B cell (primary cell): ENCODE measurements at regions of chr22 and their contacts with region 1.

Region 1: GRCh38 chr22:32660292-32660691 is 141.2 kb upstream of the TIMP3 start:
- DNase-seq: peak; percentile 61
- ATAC-seq: peak; percentile 31
- H3K4me3 ChIP-seq: no peak overlapping the region
- H3K4me3 Mint-ChIP-seq: no peak overlapping the region
- H3K27ac ChIP-seq: no peak overlapping the region
- H3K27ac Mint-ChIP-seq: no peak overlapping the region
- H3K4me1 ChIP-seq: no peaks in the 10 kb centered on the region
- H3K4me1 Mint-ChIP-seq: no peaks in the 10 kb centered on the region
- H3K27me3 ChIP-seq: peaks cover 0 to 7% (median 0%) of the 10 kb centered on the region in 4 experiments
- H3K27me3 Mint-ChIP-seq: peaks cover 24% of the 10 kb centered on the region
- CTCF ChIP-seq: peak; percentile 64

Region 2: GRCh38 chr22:32354360-32355351 is 305.6 kb before region 1 on chr22:
- CTCF ChIA-PET with region 1: no interaction called
- POLR2A ChIA-PET with region 1: no interaction called
- intact Hi-C with region 1: no loop called
- DNase-seq: no peak
- ATAC-seq: no peak
- H3K4me3 ChIP-seq: no peak overlapping the region
- H3K4me3 Mint-ChIP-seq: no peak overlapping the region
- H3K27ac ChIP-seq: no peak overlapping the region
- H3K27ac Mint-ChIP-seq: no peak overlapping the region
- H3K4me1 ChIP-seq: no peaks in the 10 kb centered on the region
- H3K4me1 Mint-ChIP-seq: no peaks in the 10 kb centered on the region
- H3K27me3 ChIP-seq: no peaks in the 10 kb centered on the region
- H3K27me3 Mint-ChIP-seq: peaks cover 4% of the 10 kb centered on the region
- CTCF ChIP-seq: no peak

Region 3: DNA sequence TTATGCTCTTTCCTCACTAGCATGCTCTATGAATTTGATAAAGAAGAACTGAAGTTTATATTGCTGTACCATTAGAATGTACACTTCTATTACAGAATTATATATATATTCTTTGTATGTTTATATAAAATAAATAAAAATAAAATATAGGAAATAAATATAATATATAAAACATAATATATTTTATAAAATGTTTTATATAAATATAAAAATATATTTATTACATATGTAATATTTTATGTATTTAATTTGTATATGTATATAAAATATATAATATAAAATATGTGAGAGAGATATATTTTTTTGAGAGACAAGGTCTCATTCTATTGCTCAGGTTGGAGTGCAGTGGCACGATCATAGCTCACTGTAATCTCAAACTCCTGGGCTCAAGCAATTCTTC is 229.9 kb before region 1 on chr22:
- CTCF ChIA-PET with region 1: no interaction called
- POLR2A ChIA-PET with region 1: no interaction called
- intact Hi-C with region 1: no loop called
- DNase-seq: no peak
- ATAC-seq: no peak
- H3K4me3 ChIP-seq: no peak overlapping the region
- H3K4me3 Mint-ChIP-seq: no peak overlapping the region
- H3K27ac ChIP-seq: no peak overlapping the region
- H3K27ac Mint-ChIP-seq: no peak overlapping the region
- H3K4me1 ChIP-seq: no peaks in the 10 kb centered on the region
- H3K4me1 Mint-ChIP-seq: no peaks in the 10 kb centered on the region
- H3K27me3 ChIP-seq: peaks cover 0 to 4% (median 2%) of the 10 kb centered on the region in 4 experiments
- H3K27me3 Mint-ChIP-seq: peaks cover 46% of the 10 kb centered on the region
- CTCF ChIP-seq: no peak

Region 4: DNA sequence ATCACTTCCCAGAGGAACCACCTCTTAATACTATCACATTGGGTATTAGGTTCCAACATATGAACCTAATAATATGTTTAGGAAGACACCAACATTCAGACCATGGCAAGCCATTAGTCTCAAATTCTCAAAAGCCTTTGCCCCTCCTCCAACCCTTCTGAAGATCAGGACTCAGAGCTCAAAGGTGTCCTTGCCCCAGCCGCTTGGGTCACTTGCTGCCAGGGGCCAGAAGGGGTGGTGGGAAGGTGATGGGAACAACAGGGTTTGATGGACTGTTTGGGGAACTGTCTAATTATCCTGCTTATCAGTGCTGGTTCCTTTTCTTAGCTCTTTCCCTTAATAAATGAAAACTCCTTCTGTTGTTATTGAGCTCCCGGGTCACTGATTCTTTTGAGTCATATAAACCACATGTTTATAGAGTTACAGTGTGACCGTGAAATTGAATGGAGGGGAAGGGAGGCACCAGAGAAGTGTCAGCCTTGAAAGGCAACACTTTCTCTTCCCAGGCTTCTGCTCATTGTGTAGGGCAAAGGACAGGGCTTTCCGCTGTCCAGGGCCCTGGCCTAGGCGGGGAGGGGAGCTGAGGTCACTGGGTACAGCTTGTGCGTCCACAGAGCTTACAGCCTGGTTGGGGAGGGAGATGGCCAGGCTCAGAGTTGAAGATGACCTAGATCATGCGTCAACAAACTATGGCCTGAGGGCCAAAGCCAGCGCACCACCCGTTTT is 80.6 kb before region 1 on chr22:
- CTCF ChIA-PET with region 1: no interaction called
- POLR2A ChIA-PET with region 1: no interaction called
- intact Hi-C with region 1: no loop called
- DNase-seq: no peak
- ATAC-seq: no peak
- H3K4me3 ChIP-seq: no peak overlapping the region
- H3K4me3 Mint-ChIP-seq: no peak overlapping the region
- H3K27ac ChIP-seq: no peak overlapping the region
- H3K27ac Mint-ChIP-seq: no peak overlapping the region
- H3K4me1 ChIP-seq: no peaks in the 10 kb centered on the region
- H3K4me1 Mint-ChIP-seq: no peaks in the 10 kb centered on the region
- H3K27me3 ChIP-seq: no peaks in the 10 kb centered on the region
- H3K27me3 Mint-ChIP-seq: peaks cover 16% of the 10 kb centered on the region
- CTCF ChIP-seq: no peak

Region 5: GRCh38 chr22:32985899-32986765 is 325.8 kb after region 1 on chr22:
- CTCF ChIA-PET with region 1: no interaction called
- POLR2A ChIA-PET with region 1: no interaction called
- intact Hi-C with region 1: loop called (anchors 5 kb)
- DNase-seq: peak; percentile 50
- ATAC-seq: peak; percentile 39
- H3K4me3 ChIP-seq: no peak overlapping the region
- H3K4me3 Mint-ChIP-seq: no peak overlapping the region
- H3K27ac ChIP-seq: no peak overlapping the region
- H3K27ac Mint-ChIP-seq: no peak overlapping the region
- H3K4me1 ChIP-seq: no peaks in the 10 kb centered on the region
- H3K4me1 Mint-ChIP-seq: peaks cover 3% of the 10 kb centered on the region
- H3K27me3 ChIP-seq: peaks cover 0 to 4% (median 0%) of the 10 kb centered on the region in 4 experiments
- H3K27me3 Mint-ChIP-seq: peaks cover 16% of the 10 kb centered on the region
- CTCF ChIP-seq: peak; percentile 64

Region 6: GRCh38 chr22:33038131-33038772 is 378.0 kb after region 1 on chr22:
- CTCF ChIA-PET with region 1: no interaction called
- POLR2A ChIA-PET with region 1: no interaction called
- intact Hi-C with region 1: no loop called
- DNase-seq: no peak
- ATAC-seq: no peak
- H3K4me3 ChIP-seq: no peak overlapping the region
- H3K4me3 Mint-ChIP-seq: no peak overlapping the region
- H3K27ac ChIP-seq: no peak overlapping the region
- H3K27ac Mint-ChIP-seq: no peak overlapping the region
- H3K4me1 ChIP-seq: no peaks in the 10 kb centered on the region
- H3K4me1 Mint-ChIP-seq: no peaks in the 10 kb centered on the region
- H3K27me3 ChIP-seq: peaks cover 0 to 6% (median 0%) of the 10 kb centered on the region in 4 experiments
- H3K27me3 Mint-ChIP-seq: peaks cover 33% of the 10 kb centered on the region
- CTCF ChIP-seq: no peak

Region 7: GRCh38 chr22:33202455-33202854 is 542.2 kb after region 1 on chr22:
- CTCF ChIA-PET with region 1: no interaction called
- POLR2A ChIA-PET with region 1: no interaction called
- intact Hi-C with region 1: loop called (anchors 2 kb)
- DNase-seq: peak; percentile 22
- ATAC-seq: no peak
- H3K4me3 ChIP-seq: peak overlapping the region in 1 of 5 experiments; percentile 11
- H3K4me3 Mint-ChIP-seq: peak overlapping the region; percentile 10
- H3K27ac ChIP-seq: no peak overlapping the region
- H3K27ac Mint-ChIP-seq: no peak overlapping the region
- H3K4me1 ChIP-seq: peaks cover 29 to 36% of the 10 kb centered on the region in 2 donors
- H3K4me1 Mint-ChIP-seq: peaks cover 34% of the 10 kb centered on the region
- H3K27me3 ChIP-seq: no peaks in the 10 kb centered on the region
- H3K27me3 Mint-ChIP-seq: peaks cover 10% of the 10 kb centered on the region
- CTCF ChIP-seq: no peak

Region 8: DNA sequence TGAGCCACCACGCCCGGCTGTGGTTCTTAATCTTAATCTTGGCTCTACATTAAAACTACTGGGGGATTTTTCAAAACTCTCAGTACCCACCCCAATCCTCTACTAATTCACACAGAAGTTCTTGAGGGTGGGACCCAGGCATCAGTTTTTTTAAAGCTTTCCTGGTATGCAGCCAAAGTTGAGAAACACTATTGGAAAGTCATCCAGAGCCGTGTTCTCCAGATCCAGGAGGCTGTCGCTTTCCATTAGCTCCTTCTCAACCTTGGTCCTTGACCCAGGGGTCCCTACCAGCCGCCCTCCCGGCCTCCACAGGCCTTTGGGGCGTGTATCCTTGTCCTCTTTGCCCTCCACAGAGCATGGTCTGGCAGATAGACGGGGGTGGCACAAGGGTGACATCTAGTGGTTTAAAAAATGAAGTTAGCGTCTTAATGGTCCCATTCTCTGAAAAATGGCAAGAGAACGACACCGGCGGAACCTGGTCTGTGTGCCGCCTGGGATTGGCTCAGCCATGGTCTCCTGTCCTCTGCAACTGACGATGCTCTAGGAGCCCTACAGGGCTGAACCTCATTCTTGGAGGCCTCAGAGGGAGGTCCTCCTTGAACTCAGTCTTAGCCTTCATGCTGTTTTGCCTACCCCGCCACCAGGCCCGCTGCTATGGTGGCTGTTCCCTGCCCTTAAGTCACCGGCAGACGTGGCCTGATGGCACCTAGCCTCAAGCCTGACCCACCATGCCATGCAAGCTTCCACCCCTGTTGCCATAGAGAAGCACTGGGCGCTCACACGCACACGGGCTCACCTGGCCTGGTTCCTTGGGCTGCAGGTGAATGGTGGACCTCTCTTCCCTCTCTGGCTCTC is 549.9 kb after region 1 on chr22:
- CTCF ChIA-PET with region 1: interaction called, 10 read pairs
- POLR2A ChIA-PET with region 1: interaction called, 3 read pairs
- intact Hi-C with region 1: no loop called
- DNase-seq: peak; percentile 80
- ATAC-seq: peak; percentile 82
- H3K4me3 ChIP-seq: no peak overlapping the region
- H3K4me3 Mint-ChIP-seq: no peak overlapping the region
- H3K27ac ChIP-seq: no peak overlapping the region
- H3K27ac Mint-ChIP-seq: no peak overlapping the region
- H3K4me1 ChIP-seq: peaks cover 8 to 9% of the 10 kb centered on the region in 2 donors
- H3K4me1 Mint-ChIP-seq: peaks cover 16% of the 10 kb centered on the region
- H3K27me3 ChIP-seq: no peaks in the 10 kb centered on the region
- H3K27me3 Mint-ChIP-seq: peaks cover 5% of the 10 kb centered on the region
- CTCF ChIP-seq: peak; percentile 86